Activated CD8-positive, alpha-beta T cell treated with anti-CD3 and anti-CD28 coated beads, Interleukin-2, amount 10 ng/mL, durations not matched to agents 7 days and 5 days (primary cell): ENCODE measurements at regions of chr19 and their contacts with region 1.

Region 1: DNA sequence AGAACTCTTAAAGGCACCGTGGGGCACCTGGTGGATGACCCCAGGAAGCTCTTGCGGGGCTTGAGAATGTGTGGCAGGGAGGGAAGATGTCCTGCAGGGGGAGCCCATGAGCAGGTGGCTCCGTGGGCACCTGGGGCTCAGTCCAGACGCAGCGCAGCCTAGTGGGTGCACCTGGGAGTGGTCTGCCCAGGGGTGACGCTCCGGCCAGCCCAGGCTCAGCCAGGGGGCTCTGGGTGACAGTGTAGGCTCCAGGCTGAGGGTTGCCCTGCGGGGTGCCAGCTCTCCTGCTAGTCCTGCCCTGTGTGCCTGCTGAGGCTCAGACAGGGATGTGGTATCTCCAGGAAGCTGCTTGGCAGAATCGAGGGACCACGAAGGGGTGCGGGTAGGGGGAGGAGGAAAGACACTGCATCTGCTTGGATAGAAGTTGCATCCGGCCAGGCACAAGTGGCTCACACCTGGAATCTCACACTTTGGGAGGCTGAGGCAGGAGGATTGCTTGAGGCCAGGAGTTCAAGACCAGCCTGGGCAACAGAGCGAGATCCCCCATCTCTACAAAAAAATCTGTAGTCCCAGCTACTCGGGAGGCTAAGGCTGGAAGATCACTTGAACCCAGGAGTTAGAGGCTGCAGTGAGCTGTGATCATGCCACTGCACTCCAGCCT is 15.0 kb upstream of the PGLS start:
- DNase-seq: peak; percentile 90
- ATAC-seq: peak; percentile 98
- H3K4me3 Mint-ChIP-seq: peak overlapping the region; percentile 13
- H3K27ac Mint-ChIP-seq: peak overlapping the region; percentile 72
- H3K4me1 Mint-ChIP-seq: peaks cover 42% of the 10 kb centered on the region
- H3K27me3 Mint-ChIP-seq: no peaks in the 10 kb centered on the region

Region 2: DNA sequence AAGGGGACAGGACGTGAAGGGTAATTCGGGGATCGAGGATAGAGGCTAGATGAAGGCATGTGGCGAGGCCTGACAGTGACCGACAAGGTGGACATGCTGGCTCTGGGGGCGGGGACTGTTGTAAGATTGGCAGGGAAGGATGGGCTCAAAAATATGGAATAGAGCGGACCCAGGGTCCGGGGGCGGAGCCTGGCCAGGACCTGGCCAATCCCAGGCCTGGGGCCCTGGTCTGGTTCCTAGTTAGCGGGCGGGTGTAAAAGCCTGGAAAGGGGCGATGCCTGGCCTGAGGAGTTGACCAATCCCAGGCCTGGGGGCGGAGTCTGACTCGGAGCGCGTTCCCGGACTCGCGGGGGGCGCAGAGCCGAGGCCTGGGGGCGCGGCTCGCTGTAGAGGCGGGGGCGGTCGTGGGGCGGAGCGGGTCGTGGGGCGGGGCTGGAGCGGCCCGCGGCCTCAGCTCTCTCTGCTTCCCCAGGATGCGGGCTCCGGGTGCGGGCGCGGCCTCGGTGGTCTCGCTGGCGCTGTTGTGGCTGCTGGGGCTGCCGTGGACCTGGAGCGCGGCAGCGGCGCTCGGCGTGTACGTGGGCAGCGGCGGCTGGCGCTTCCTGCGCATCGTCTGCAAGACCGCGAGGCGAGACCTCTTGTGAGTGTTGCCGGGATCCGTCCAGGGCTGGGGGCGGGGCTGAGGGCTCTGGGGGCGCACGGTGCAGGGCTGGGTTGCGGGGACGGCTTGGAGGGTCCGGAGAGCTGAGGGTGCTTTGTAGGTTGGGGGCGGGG is 26.2 kb before region 1 on chr19 and contains the start of gene SLC27A1:
- CTCF ChIA-PET with region 1: interaction called, 49 read pairs
- POLR2A ChIA-PET with region 1: interaction called, 3 read pairs
- DNase-seq: peak; percentile 95
- ATAC-seq: peak; percentile 91
- H3K4me3 Mint-ChIP-seq: peak within 1 kb of the TSS; percentile 85
- H3K27ac Mint-ChIP-seq: peak within 1 kb of the TSS; percentile 90
- H3K4me1 Mint-ChIP-seq: peaks cover 47% of the 10 kb centered on the region
- H3K27me3 Mint-ChIP-seq: peaks cover 5% of the 10 kb centered on the region
- total RNA-seq, gene SLC27A1: 7.3 to 7.4 TPM

Region 3: GRCh38 chr19:17506745-17507144 is 10.3 kb after region 1 on chr19:
- CTCF ChIA-PET with region 1: interaction called, 50 read pairs
- POLR2A ChIA-PET with region 1: interaction called, 11 read pairs
- DNase-seq: no peak
- ATAC-seq: no peak
- H3K4me3 Mint-ChIP-seq: no peak overlapping the region
- H3K27ac Mint-ChIP-seq: no peak overlapping the region
- H3K4me1 Mint-ChIP-seq: peaks cover 26% of the 10 kb centered on the region
- H3K27me3 Mint-ChIP-seq: no peaks in the 10 kb centered on the region

Region 4: GRCh38 chr19:17522988-17523872 is 26.8 kb after region 1 on chr19:
- CTCF ChIA-PET with region 1: interaction called, 40 read pairs
- POLR2A ChIA-PET with region 1: interaction called, 5 read pairs
- DNase-seq: peak; percentile 89
- ATAC-seq: peak; percentile 89
- H3K4me3 Mint-ChIP-seq: peak overlapping the region; percentile 63
- H3K27ac Mint-ChIP-seq: peak overlapping the region; percentile 92
- H3K4me1 Mint-ChIP-seq: peaks cover 49% of the 10 kb centered on the region
- H3K27me3 Mint-ChIP-seq: no peaks in the 10 kb centered on the region

Region 5: GRCh38 chr19:17555929-17556813 is 59.7 kb after region 1 on chr19:
- CTCF ChIA-PET with region 1: interaction called, 11 read pairs
- POLR2A ChIA-PET with region 1: no interaction called
- DNase-seq: peak; percentile 44
- ATAC-seq: peak; percentile 9
- H3K4me3 Mint-ChIP-seq: peak overlapping the region; percentile 85
- H3K27ac Mint-ChIP-seq: peak overlapping the region; percentile 78
- H3K4me1 Mint-ChIP-seq: peaks cover 21% of the 10 kb centered on the region
- H3K27me3 Mint-ChIP-seq: no peaks in the 10 kb centered on the region